ENCODE measurements at regions of chr17 and their contacts with region 1.

Region 1: GRCh38 chr17:63984651-63985386 is 12.1 kb upstream of the SCN4A start:
- DNase-seq: peak; percentile 79
- H3K4me3 Mint-ChIP-seq: no peak overlapping the region
- H3K27ac Mint-ChIP-seq: peak overlapping the region; percentile 85
- H3K4me1 Mint-ChIP-seq: peaks cover 35% of the 10 kb centered on the region
- H3K27me3 Mint-ChIP-seq: no peaks in the 10 kb centered on the region

Region 2: GRCh38 chr17:63911657-63912426 is 73.0 kb before region 1 on chr17:
- CTCF ChIA-PET with region 1: interaction called, 32 read pairs
- POLR2A ChIA-PET with region 1: no interaction called
- DNase-seq: peak; percentile 69
- H3K4me3 Mint-ChIP-seq: no peak overlapping the region
- H3K27ac Mint-ChIP-seq: no peak overlapping the region
- H3K4me1 Mint-ChIP-seq: no peaks in the 10 kb centered on the region
- H3K27me3 Mint-ChIP-seq: peaks cover 26% of the 10 kb centered on the region

Region 3: GRCh38 chr17:63919311-63919723 is 65.5 kb before region 1 on chr17:
- CTCF ChIA-PET with region 1: interaction called, 32 read pairs
- POLR2A ChIA-PET with region 1: interaction called, 6 read pairs
- DNase-seq: peak; percentile 79
- H3K4me3 Mint-ChIP-seq: no peak overlapping the region
- H3K27ac Mint-ChIP-seq: no peak overlapping the region
- H3K4me1 Mint-ChIP-seq: peaks cover 8% of the 10 kb centered on the region
- H3K27me3 Mint-ChIP-seq: peaks cover 19% of the 10 kb centered on the region

Region 4: GRCh38 chr17:63931099-63931561 is 53.7 kb before region 1 on chr17:
- CTCF ChIA-PET with region 1: interaction called, 16 read pairs
- POLR2A ChIA-PET with region 1: interaction called, 7 read pairs
- DNase-seq: peak; percentile 79
- H3K4me3 Mint-ChIP-seq: peak overlapping the region; percentile 96
- H3K27ac Mint-ChIP-seq: peak overlapping the region; percentile 90
- H3K4me1 Mint-ChIP-seq: peaks cover 31% of the 10 kb centered on the region
- H3K27me3 Mint-ChIP-seq: peaks cover 4% of the 10 kb centered on the region

Region 5: DNA sequence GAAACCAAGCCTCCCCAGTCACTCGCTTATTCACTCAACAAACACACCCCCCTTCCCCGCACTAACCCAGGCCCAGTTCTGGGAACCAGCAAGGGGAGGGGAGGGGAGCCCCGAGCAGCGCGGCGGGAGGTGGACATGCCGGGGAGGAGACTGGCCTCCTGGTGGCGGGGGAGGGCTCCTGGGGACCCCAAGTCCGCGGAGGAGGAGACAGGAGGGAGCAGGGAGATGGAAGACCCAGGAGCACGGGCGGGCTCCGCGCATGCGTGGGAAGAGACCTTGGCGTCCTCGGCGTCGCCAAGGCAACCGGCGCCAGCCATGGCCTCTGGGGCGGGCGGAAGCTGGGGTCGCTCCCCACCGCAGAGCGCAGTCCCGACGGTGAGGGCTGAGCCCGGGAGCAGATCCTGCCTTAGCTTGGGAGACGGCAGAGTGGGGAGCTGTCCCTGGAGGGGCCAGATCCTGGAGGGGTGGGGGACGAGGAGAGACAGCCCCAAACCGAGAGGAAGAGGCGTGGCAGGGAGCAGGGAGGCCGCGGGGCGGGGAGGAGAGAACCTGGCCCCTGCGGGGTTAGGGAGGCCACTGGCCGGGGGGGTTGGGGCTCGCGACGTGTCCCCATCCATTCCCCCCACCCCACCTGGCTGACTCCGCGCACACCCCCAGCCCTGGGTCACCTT is 13.4 kb after region 1 on chr17 and contains the start of gene PRR29:
- CTCF ChIA-PET with region 1: interaction called, 6 read pairs
- POLR2A ChIA-PET with region 1: interaction called, 16 read pairs
- DNase-seq: peak; percentile 82
- H3K4me3 Mint-ChIP-seq: peak within 1 kb of the TSS; percentile 92
- H3K27ac Mint-ChIP-seq: peak within 1 kb of the TSS; percentile 76
- H3K4me1 Mint-ChIP-seq: peaks cover 66% of the 10 kb centered on the region
- H3K27me3 Mint-ChIP-seq: peaks cover 8% of the 10 kb centered on the region
- total RNA-seq, gene PRR29: 12.0 to 15.1 TPM